Activated CD8-positive, alpha-beta T cell treated with anti-CD3 and anti-CD28 coated beads for 36 hours (primary cell): ENCODE measurements at regions of chr2 and their contacts with region 1.

Region 1: GRCh38 chr2:75466708-75467311 is 93.9 kb downstream of the EVA1A start:
- DNase-seq: peak; percentile 42
- ATAC-seq: no peak
- H3K4me3 Mint-ChIP-seq: no peak overlapping the region
- H3K27ac Mint-ChIP-seq: no peak overlapping the region
- H3K4me1 Mint-ChIP-seq: no peaks in the 10 kb centered on the region
- H3K27me3 Mint-ChIP-seq: peaks cover 14% of the 10 kb centered on the region
- CTCF ChIP-seq: peak; percentile 59

Region 2: GRCh38 chr2:75627895-75628504 is 161.2 kb after region 1 on chr2:
- CTCF ChIA-PET with region 1: interaction called, 4 read pairs
- POLR2A ChIA-PET with region 1: no interaction called
- intact Hi-C with region 1: loop called (anchors 5 kb)
- DNase-seq: peak; percentile 82
- ATAC-seq: peak; percentile 80
- H3K4me3 Mint-ChIP-seq: no peak overlapping the region
- H3K27ac Mint-ChIP-seq: no peak overlapping the region
- H3K4me1 Mint-ChIP-seq: no peaks in the 10 kb centered on the region
- H3K27me3 Mint-ChIP-seq: peaks cover 25% of the 10 kb centered on the region
- CTCF ChIP-seq: peak; percentile 76